ENCODE measurements at regions of chr2 and their contacts with region 1.

Region 1: GRCh38 chr2:172200495-172201085 is 97.9 kb upstream of the DLX2 start:
- DNase-seq: peak; percentile 52
- ATAC-seq: no peak
- H3K4me3 Mint-ChIP-seq: no peak overlapping the region
- H3K27ac Mint-ChIP-seq: no peak overlapping the region
- H3K4me1 Mint-ChIP-seq: peaks cover 13% of the 10 kb centered on the region
- H3K27me3 Mint-ChIP-seq: peaks cover 33% of the 10 kb centered on the region

Region 2: GRCh38 chr2:172253190-172254052 is 52.8 kb after region 1 on chr2:
- CTCF ChIA-PET with region 1: no interaction called
- POLR2A ChIA-PET with region 1: no interaction called
- intact Hi-C with region 1: loop called in 1 of 2 experiments (anchors 5 kb)
- DNase-seq: peak; percentile 91
- ATAC-seq: peak; percentile 96
- H3K4me3 Mint-ChIP-seq: no peak overlapping the region
- H3K27ac Mint-ChIP-seq: peak overlapping the region; percentile 40
- H3K4me1 Mint-ChIP-seq: peaks cover 36% of the 10 kb centered on the region
- H3K27me3 Mint-ChIP-seq: peaks cover 9% of the 10 kb centered on the region